ENCODE measurements at regions of chr5 and their contacts with region 1.

Region 1: GRCh38 chr5:39570403-39571027 is 145.7 kb upstream of the DAB2 start:
- DNase-seq: no peak
- ATAC-seq: no peak
- H3K4me3 ChIP-seq: no peak overlapping the region
- H3K27ac ChIP-seq: no peak overlapping the region
- H3K4me1 ChIP-seq: no peaks in the 10 kb centered on the region
- H3K27me3 ChIP-seq: no peaks in the 10 kb centered on the region

Region 2: DNA sequence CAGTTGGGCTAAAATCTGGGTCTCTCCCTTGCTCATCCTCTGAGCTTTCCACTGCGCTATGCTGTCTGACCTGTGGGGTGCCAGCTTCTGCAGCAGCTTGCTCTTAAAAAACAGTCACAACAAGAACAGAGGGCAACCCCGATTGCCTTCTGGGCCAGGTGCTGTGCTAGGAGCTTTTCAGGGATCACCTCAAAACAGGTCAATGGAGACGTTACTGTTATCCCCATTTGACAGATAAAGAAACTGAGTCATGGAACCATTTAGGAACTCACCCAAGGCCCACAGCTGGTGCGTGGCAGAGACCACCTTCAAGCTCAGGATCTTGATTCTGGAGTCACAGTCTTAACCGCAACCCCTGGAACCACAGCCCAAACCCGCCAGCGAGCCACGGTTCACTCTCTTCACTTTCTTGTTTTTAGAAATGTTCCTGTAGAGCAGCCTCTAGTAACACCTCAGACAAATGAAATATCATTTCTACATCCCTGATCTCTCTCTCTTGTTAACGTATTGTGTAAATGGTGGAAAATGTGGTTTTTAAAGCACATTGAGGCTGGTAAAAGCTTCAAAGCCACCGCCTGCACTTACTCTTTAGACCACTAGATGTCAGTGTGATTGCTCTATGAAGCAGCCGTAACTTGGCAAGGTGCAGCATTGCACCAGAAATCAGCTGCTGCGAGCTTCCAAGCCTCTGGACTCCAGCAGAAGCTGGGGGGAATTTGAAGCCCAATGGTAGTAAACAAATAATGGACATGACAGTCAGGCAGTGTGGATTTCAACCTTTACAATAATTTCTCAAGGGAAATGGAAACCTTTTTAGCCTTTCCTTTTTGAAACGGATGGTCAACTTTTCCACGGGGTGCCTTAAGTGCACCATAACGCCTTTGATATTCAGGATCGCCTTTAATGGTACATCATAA is 352.9 kb before region 1 on chr5:
- intact Hi-C with region 1: loop called in 2 of 4 experiments (anchors 5 to 10 kb)
- DNase-seq: peak; percentile 71 to 88 (median 72)
- ATAC-seq: peak; percentile 80 to 85
- H3K4me3 ChIP-seq: no peak overlapping the region
- H3K27ac ChIP-seq: no peak overlapping the region
- H3K4me1 ChIP-seq: no peaks in the 10 kb centered on the region
- H3K27me3 ChIP-seq: no peaks in the 10 kb centered on the region

Region 3: GRCh38 chr5:39376293-39376714 is 194.2 kb before region 1 on chr5:
- intact Hi-C with region 1: loop called in 1 of 4 experiments (anchors 5 kb)
- DNase-seq: no peak
- ATAC-seq: peak in 1 of 2 donors; percentile 79
- H3K4me3 ChIP-seq: no peak overlapping the region
- H3K27ac ChIP-seq: no peak overlapping the region
- H3K4me1 ChIP-seq: no peaks in the 10 kb centered on the region
- H3K27me3 ChIP-seq: no peaks in the 10 kb centered on the region

Region 4: DNA sequence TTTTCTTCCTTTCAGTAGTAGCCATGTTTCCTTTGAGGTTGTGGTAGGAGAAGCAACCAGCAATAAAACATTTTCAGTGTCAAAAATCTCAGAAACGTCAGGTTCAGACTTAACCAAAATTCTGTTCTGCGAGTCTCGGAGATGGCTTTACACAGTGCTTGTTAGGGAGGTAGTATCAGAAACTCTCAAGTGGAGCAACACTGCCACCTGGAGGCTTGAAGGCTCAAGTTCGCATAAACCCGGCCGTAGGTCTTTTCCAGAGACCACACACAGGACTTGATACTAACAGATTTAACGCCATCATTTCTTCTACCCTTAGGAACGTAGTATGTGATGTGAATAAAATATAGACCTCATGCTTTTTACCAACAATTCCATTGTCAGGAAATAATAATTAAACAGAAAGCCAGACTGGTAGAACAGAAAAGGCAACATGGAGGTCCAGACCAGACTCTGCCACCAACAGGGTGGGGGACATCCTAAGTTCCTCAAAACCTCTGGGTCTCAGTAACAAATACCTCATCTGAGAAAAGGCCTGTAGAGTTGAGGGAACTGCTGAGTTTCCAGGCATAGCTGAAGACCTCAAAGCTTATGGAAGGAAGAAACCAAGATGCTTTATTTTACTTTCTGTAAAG is 1117.7 kb after region 1 on chr5:
- intact Hi-C with region 1: loop called (anchors 5 to 10 kb)
- DNase-seq: peak; percentile 75 to 87 (median 81)
- ATAC-seq: peak; percentile 95
- H3K4me3 ChIP-seq: peak overlapping the region; percentile 39
- H3K27ac ChIP-seq: no peak overlapping the region
- H3K4me1 ChIP-seq: peaks cover 2% of the 10 kb centered on the region
- H3K27me3 ChIP-seq: no peaks in the 10 kb centered on the region

Region 5: DNA sequence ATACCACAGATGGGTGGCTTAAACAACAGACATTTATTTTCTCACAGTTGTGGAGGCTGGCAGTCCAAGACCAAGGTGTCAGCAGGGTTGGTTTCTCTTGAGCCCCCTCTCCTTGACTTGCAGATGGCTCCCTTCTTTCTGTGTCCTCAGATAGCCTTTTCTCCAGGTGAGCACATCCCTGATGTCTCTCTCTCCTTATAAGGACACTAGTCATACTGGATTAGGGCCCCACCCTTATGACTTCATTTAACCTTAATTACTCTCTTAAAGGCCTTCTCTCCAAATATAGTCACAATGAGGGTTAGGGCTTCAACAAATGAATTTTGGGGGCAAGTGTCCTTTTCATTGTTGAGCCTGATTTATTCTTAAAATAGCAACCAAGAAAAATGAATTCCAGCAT is 1123.9 kb after region 1 on chr5:
- intact Hi-C with region 1: loop called (anchors 5 to 10 kb)
- DNase-seq: no peak
- ATAC-seq: no peak
- H3K4me3 ChIP-seq: no peak overlapping the region
- H3K27ac ChIP-seq: no peak overlapping the region
- H3K4me1 ChIP-seq: peaks cover 2% of the 10 kb centered on the region
- H3K27me3 ChIP-seq: no peaks in the 10 kb centered on the region

Region 6: DNA sequence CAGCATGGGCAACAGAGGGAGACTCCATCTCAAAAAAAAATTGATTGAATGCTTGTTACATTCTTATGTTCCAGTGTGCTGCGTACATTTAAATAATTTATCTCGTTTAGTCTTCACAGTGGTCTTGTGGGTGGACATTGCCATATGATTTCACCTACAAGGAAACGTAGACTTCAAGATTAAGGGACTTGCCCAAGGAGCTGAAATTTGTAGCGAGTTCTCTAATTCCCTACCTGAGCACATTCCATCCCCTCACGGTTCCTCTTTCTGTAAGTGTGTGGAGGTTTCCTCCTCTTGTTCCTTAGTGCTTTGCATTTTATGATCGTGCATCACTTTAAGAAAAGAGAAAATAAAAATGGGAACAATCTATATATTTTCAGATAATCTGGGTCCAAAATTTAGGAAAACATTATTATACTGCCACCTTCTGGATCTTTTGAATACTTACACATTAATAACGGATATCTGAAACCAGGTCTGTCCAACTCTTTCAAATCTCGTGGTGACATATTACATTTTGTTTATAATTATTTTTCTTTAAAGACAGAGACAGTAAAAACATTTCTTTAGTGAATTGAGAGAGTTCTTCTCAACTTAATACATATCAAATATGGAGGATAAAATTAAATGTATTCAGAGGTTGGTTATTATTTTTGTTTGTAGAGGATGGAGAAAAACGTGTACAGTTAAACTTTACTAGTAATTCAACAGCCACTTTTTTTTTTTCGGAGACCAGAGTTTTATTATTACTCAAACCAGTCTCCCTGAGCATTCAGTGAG is 1308.8 kb after region 1 on chr5:
- intact Hi-C with region 1: loop called in 1 of 4 experiments (anchors 10 kb)
- DNase-seq: no peak
- ATAC-seq: no peak
- H3K4me3 ChIP-seq: no peak overlapping the region
- H3K27ac ChIP-seq: no peak overlapping the region
- H3K4me1 ChIP-seq: no peaks in the 10 kb centered on the region
- H3K27me3 ChIP-seq: no peaks in the 10 kb centered on the region